OCI-LY7 (cell line): ENCODE measurements at regions of chr4 and their contacts with region 1.

Region 1: DNA sequence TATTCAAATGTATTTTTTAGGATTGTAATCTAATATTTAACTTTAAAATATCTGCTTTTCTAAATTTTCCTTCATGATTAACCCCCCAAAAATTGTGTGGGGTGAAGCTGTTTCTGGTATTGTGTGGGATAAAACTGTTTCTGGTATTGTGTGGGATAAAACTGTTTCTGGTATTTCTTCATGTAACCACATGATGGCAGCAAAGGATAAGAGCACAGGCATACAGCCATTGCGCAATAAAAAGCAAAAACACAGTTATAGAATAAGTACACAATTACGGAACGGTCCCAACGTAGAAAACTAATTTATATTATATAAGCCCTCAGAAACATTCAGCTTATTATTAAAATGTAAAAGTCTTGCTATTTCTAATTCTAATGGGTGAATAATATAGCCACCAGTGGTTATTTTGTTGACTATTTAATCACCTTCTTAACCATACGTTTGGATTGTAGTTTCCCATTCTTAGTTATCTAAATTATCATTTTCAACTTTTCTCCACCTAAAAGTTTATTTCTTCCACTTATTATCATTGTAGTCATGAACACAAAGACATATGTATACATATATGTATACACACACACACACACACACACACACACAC is 333.9 kb upstream of the FSTL5 start:
- DNase-seq: peak; percentile 53
- H3K4me3 ChIP-seq: no peak overlapping the region
- H3K27ac ChIP-seq: no peak overlapping the region
- H3K4me1 ChIP-seq: no peaks in the 10 kb centered on the region
- CTCF ChIP-seq: peak; percentile 90

Region 2: DNA sequence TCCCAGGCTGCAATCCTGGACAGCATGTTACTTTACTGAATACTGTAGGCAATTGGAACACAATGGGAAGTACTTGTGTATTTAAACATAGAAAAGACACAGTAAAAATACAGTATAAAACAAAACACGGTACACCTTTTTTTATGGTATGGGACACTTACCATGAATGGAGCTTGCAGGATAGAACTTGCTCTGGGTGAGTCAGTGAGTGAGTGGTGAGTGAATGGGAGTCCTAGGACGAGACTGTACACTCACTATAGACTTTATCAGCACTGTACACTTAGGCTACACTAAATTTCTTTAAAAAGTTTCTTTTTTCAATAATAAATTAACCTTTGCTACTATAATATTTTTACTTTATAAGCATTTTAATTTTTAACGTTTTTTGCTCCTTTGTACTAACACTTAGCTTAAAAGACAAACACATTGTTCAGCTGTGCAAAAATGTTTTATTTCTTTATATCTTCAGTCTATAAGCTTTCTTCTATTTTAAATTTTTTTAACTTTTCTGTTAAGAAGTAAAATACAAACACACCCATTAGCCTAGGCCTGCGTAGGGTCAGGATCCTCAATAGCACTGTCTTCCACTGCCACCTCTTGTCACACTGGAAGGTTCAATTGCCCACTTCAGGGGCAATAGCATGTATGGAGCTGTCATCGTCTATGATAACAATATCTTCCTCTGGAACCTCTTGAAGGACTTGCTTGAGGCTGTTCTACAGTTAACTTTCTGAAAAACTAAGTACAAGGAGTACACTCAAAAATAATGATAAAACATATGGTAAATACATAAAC is 40.4 kb before region 1 on chr4:
- CTCF ChIA-PET with region 1: no interaction called
- POLR2A ChIA-PET with region 1: no interaction called
- intact Hi-C with region 1: no loop called
- DNase-seq: no peak
- H3K4me3 ChIP-seq: no peak overlapping the region
- H3K27ac ChIP-seq: no peak overlapping the region
- H3K4me1 ChIP-seq: no peaks in the 10 kb centered on the region
- CTCF ChIP-seq: no peak

Region 3: DNA sequence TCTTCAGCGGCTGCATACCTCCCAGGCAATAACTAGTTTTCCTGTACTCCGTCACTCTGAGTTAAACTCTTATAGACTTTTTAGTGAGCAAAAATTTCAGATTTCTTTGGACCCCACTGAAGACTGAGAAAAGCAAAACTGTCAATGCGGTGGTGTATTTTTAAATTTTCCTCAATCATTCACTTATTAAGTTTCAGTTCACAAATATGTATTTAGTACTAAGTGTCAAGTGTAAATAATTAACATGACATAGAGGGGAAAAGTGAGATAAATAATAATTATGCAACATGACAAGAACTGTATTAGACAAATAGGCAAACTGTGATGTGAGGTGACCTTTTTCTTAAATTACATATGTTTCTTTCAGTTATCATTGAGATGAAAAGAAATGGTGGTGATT is 544.6 kb after region 1 on chr4:
- CTCF ChIA-PET with region 1: no interaction called
- POLR2A ChIA-PET with region 1: no interaction called
- intact Hi-C with region 1: loop called (anchors 2 kb)
- DNase-seq: no peak
- H3K4me3 ChIP-seq: no peak overlapping the region
- H3K27ac ChIP-seq: no peak overlapping the region
- H3K4me1 ChIP-seq: no peaks in the 10 kb centered on the region
- CTCF ChIP-seq: no peak

Region 4: DNA sequence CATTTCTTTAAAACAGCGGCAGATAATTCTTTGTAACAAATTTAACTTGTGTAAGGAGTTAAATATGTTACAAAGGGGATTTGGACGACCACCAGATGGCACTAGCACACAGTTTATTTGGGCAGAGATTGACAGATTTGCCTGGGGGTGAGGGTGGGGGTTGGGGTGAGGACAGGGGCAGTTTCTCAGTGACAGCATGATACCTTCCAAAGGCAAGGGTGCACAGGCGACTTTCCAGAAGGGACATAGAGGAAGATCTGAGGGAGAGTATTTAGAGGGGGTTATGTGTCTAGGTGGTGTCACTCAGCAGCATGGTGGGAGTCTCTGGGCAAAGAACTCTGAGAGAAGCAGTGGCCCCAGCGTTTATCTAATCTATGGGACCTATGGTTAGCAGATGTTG is 987.2 kb after region 1 on chr4:
- CTCF ChIA-PET with region 1: no interaction called
- POLR2A ChIA-PET with region 1: no interaction called
- intact Hi-C with region 1: loop called (anchors 5 kb)
- DNase-seq: peak; percentile 77
- H3K4me3 ChIP-seq: no peak overlapping the region
- H3K27ac ChIP-seq: no peak overlapping the region
- H3K4me1 ChIP-seq: peaks cover 30% of the 10 kb centered on the region
- CTCF ChIP-seq: peak; percentile 96

Region 5: DNA sequence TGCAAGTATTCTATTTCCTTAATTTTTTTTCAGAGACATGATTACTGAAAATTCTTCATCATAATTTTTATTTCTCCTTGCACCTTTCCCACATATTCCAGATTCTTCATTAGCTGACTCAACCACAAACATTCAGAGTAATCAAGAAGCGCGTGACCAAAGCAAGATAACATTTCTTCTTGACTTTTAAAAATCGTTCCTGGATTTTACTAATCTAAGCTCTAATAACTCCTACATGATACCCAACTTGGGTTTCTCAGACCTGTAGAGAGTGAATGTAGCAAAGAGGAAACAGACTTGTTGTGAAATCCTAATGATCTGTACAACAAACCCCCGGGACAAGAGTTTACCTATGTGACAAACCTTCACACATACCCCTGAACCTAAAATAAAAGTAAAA is 1611.9 kb after region 1 on chr4:
- CTCF ChIA-PET with region 1: no interaction called
- POLR2A ChIA-PET with region 1: no interaction called
- intact Hi-C with region 1: no loop called
- DNase-seq: no peak
- H3K4me3 ChIP-seq: no peak overlapping the region
- H3K27ac ChIP-seq: no peak overlapping the region
- H3K4me1 ChIP-seq: no peaks in the 10 kb centered on the region
- CTCF ChIP-seq: no peak